CD4-positive, alpha-beta T cell (primary cell): ENCODE measurements at regions of chr9 and their contacts with region 1.

Region 1: DNA sequence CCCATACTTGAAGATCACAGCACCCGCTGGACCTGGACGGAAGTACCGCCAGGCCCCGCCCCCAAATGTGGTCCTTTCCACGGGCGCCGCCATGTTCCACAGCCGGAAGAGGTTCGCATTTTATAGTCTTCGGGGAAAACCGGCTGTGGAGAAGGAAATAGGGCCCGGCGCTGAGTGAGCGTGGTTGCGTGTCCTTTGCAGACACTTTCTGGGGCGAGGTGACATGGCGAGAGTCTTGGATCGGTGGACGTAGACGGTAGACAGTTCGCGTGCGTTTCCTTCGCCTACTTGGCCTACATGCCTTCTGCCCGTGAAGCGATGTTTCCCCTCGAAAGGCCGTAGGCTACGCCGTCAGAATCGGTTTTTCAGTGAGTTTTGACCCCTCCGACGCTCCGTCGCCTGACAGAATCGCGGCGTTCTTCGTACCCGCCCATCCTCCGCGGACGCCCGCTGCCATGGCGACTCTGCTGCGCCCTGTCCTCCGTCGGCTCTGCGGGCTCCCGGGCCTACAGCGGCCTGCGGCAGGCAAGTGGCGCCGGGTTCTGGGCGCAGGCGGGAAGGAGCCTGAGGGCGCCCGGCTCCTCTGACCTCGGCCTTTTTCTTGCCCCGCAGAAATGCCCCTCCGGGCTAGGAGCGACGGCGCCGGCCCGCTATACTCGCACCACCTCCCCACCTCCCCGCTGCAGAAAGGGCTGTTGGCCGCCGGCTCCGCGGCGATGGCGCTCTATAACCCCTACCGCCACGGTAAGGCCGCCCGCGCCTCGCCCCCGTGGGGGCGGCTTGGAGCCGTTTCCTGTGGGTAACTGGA is at the starts of genes COQ4 and TRUB2:
- DNase-seq: peak; percentile 87 to 96 (median 90)
- ATAC-seq: peak; percentile 89
- H3K4me3 ChIP-seq: peak within 1 kb of the TSS; percentile 80
- H3K4me3 Mint-ChIP-seq: peak within 1 kb of the TSS; percentile 91
- H3K27ac ChIP-seq: peak within 1 kb of the TSS; percentile 80 to 91
- H3K27ac Mint-ChIP-seq: peak within 1 kb of the TSS; percentile 93
- H3K4me1 ChIP-seq: peaks cover 32% of the 10 kb centered on the region
- H3K4me1 Mint-ChIP-seq: peaks cover 31% of the 10 kb centered on the region
- H3K27me3 ChIP-seq: no peaks in the 10 kb centered on the region
- H3K27me3 Mint-ChIP-seq: no peaks in the 10 kb centered on the region
- CTCF ChIP-seq: no peak
- total RNA-seq, gene COQ4: 20.7 to 21.7 TPM
- total RNA-seq, gene TRUB2: 4.8 to 6.5 TPM

Region 2: GRCh38 chr9:128191406-128192046 is 131.1 kb before region 1 on chr9 and contains the start of gene CIZ1:
- CTCF ChIA-PET with region 1: no interaction called
- POLR2A ChIA-PET with region 1: no interaction called
- intact Hi-C with region 1: loop called in 1 of 2 experiments (anchors 5 kb)
- DNase-seq: peak; percentile 43 to 88 (median 70)
- ATAC-seq: peak; percentile 82
- H3K4me3 ChIP-seq: peak within 1 kb of the TSS; percentile 75
- H3K4me3 Mint-ChIP-seq: peak within 1 kb of the TSS; percentile 93
- H3K27ac ChIP-seq: no peak within 1 kb of the TSS
- H3K27ac Mint-ChIP-seq: peak within 1 kb of the TSS; percentile 89
- H3K4me1 ChIP-seq: peaks cover 24% of the 10 kb centered on the region
- H3K4me1 Mint-ChIP-seq: peaks cover 31% of the 10 kb centered on the region
- H3K27me3 ChIP-seq: peaks cover 0 to 4% of the 10 kb centered on the region in 2 experiments
- H3K27me3 Mint-ChIP-seq: no peaks in the 10 kb centered on the region
- CTCF ChIP-seq: peak; percentile 55
- total RNA-seq, gene CIZ1: 106 to 107 TPM

Region 3: GRCh38 chr9:128218518-128219389 is 103.9 kb before region 1 on chr9:
- CTCF ChIA-PET with region 1: no interaction called
- POLR2A ChIA-PET with region 1: no interaction called
- intact Hi-C with region 1: no loop called
- DNase-seq: peak; percentile 79 to 97 (median 88)
- ATAC-seq: peak; percentile 96
- H3K4me3 ChIP-seq: peak overlapping the region; percentile 60
- H3K4me3 Mint-ChIP-seq: peak overlapping the region; percentile 69
- H3K27ac ChIP-seq: no peak overlapping the region
- H3K27ac Mint-ChIP-seq: peak overlapping the region; percentile 28
- H3K4me1 ChIP-seq: peaks cover 16% of the 10 kb centered on the region
- H3K4me1 Mint-ChIP-seq: peaks cover 12% of the 10 kb centered on the region
- H3K27me3 ChIP-seq: no peaks in the 10 kb centered on the region
- H3K27me3 Mint-ChIP-seq: no peaks in the 10 kb centered on the region
- CTCF ChIP-seq: no peak

Region 4: DNA sequence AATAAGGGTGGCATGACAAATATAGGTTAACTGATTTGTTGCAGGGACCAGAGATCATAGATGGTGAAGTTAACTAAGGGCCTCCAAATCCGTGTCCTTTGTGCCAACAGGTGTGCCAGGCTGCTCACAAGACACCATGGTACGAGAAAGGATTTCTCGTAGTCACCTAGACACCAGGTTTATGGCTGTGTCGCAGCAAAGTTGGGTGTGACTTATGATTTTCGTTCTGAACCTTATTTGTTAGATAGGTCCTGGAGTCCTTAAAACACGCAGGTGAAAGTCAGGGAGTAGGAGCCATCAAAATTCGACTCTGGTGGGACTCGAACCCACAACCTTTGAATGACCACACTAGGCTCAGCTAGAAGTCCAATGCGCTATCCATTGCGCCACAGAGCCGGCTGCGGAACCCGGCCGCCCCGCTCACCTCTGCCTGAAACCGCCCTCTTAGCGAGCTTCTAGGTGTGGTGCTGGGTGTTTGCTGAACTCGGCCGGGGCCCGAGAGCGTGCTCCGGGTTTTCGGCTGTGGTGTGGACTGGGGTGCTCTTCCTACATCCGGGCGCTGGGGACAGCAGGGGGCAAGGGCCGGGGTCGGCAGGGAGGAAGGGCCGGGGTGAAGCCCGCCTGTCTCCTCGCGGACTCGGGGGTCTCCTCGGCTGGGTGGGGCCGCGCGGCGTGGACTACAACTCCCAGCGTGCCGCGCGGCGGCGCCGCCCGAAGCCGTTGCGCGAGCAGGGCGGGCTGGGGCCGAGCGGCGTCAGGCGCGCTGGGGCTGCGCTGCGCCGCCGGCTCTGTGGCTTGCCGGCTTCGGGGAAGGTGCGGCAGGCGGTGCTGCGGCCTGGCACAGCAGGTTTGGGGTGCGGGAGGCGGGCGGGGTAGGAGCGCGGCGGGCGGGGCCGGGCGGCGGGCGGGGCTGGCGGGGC is 17.4 kb after region 1 on chr9 and contains the start of gene SLC27A4:
- CTCF ChIA-PET with region 1: interaction called, 19 read pairs
- POLR2A ChIA-PET with region 1: interaction called, 4 read pairs
- intact Hi-C with region 1: loop called (anchors 1 kb)
- DNase-seq: peak; percentile 61 to 94 (median 76)
- ATAC-seq: peak; percentile 92
- H3K4me3 ChIP-seq: peak within 1 kb of the TSS; percentile 75
- H3K4me3 Mint-ChIP-seq: peak within 1 kb of the TSS; percentile 98
- H3K27ac ChIP-seq: peak within 1 kb of the TSS; percentile 41 to 46
- H3K27ac Mint-ChIP-seq: peak within 1 kb of the TSS; percentile 81
- H3K4me1 ChIP-seq: peaks cover 21% of the 10 kb centered on the region
- H3K4me1 Mint-ChIP-seq: peaks cover 7% of the 10 kb centered on the region
- H3K27me3 ChIP-seq: no peaks in the 10 kb centered on the region
- H3K27me3 Mint-ChIP-seq: no peaks in the 10 kb centered on the region
- CTCF ChIP-seq: no peak
- total RNA-seq, gene SLC27A4: 2.2 to 3.1 TPM

Region 5: DNA sequence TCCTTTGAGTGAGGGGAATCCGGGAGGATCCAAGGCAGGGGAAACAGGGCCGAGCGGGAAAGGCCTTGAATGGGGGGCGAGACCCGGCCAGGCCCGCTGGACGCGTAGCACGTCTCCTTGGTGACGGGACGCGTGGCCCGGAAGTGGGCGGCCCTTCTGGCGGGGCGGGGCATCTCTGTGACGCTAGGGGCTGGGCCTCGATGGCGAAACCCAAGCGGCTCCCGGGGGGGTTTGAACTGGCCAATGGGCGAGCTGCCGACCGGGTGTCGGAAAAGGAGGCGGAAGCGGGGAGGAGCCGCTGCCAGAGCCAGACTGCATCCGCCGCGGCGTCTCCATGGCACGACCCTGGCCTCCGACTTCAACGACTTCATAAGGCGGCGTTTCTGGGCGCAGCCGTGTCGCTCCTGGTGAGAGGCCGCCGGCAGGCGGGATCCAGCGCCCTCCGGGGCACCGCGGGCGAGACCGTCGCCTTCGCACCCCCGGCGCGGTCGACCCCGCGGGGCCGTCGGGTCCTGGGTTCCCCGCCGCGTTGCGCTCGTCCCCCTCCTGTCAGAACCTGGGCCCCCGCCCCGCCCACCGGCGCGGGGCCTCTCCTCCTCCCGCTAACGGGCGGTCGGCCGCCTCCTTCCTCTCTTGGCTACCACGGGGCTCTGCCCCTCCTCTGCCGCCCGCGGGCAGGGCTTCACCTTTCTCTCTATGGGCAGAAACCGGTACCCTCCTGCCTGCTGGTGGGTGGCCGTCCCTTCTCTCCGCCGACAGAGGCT is 133.4 kb after region 1 on chr9 and contains the start of gene ODF2:
- CTCF ChIA-PET with region 1: no interaction called
- POLR2A ChIA-PET with region 1: no interaction called
- intact Hi-C with region 1: loop called in 1 of 2 experiments (anchors 5 kb)
- DNase-seq: peak; percentile 97 to 99 (median 98)
- ATAC-seq: peak; percentile 90
- H3K4me3 ChIP-seq: peak within 1 kb of the TSS; percentile 91
- H3K4me3 Mint-ChIP-seq: peak within 1 kb of the TSS; percentile 91
- H3K27ac ChIP-seq: peak within 1 kb of the TSS; percentile 83 to 86
- H3K27ac Mint-ChIP-seq: peak within 1 kb of the TSS; percentile 89
- H3K4me1 ChIP-seq: peaks cover 19% of the 10 kb centered on the region
- H3K4me1 Mint-ChIP-seq: peaks cover 11% of the 10 kb centered on the region
- H3K27me3 ChIP-seq: no peaks in the 10 kb centered on the region
- H3K27me3 Mint-ChIP-seq: no peaks in the 10 kb centered on the region
- CTCF ChIP-seq: no peak
- total RNA-seq, gene ODF2: 18.3 to 21.3 TPM

Region 6: GRCh38 chr9:128786681-128787601 is 464.3 kb after region 1 on chr9 and contains the start of gene TBC1D13:
- CTCF ChIA-PET with region 1: no interaction called
- POLR2A ChIA-PET with region 1: no interaction called
- intact Hi-C with region 1: loop called in 1 of 2 experiments (anchors 5 kb)
- DNase-seq: peak; percentile 82 to 95 (median 87)
- ATAC-seq: peak; percentile 92
- H3K4me3 ChIP-seq: peak within 1 kb of the TSS; percentile 79
- H3K4me3 Mint-ChIP-seq: peak within 1 kb of the TSS; percentile 96
- H3K27ac ChIP-seq: peak within 1 kb of the TSS; percentile 67 to 77
- H3K27ac Mint-ChIP-seq: peak within 1 kb of the TSS; percentile 99
- H3K4me1 ChIP-seq: peaks cover 23% of the 10 kb centered on the region
- H3K4me1 Mint-ChIP-seq: peaks cover 25% of the 10 kb centered on the region
- H3K27me3 ChIP-seq: no peaks in the 10 kb centered on the region
- H3K27me3 Mint-ChIP-seq: no peaks in the 10 kb centered on the region
- CTCF ChIP-seq: no peak
- total RNA-seq, gene TBC1D13: 25.4 to 28.7 TPM